GM12878 (cell line): ENCODE measurements at regions of chr12 and their contacts with region 1.

Region 1: DNA sequence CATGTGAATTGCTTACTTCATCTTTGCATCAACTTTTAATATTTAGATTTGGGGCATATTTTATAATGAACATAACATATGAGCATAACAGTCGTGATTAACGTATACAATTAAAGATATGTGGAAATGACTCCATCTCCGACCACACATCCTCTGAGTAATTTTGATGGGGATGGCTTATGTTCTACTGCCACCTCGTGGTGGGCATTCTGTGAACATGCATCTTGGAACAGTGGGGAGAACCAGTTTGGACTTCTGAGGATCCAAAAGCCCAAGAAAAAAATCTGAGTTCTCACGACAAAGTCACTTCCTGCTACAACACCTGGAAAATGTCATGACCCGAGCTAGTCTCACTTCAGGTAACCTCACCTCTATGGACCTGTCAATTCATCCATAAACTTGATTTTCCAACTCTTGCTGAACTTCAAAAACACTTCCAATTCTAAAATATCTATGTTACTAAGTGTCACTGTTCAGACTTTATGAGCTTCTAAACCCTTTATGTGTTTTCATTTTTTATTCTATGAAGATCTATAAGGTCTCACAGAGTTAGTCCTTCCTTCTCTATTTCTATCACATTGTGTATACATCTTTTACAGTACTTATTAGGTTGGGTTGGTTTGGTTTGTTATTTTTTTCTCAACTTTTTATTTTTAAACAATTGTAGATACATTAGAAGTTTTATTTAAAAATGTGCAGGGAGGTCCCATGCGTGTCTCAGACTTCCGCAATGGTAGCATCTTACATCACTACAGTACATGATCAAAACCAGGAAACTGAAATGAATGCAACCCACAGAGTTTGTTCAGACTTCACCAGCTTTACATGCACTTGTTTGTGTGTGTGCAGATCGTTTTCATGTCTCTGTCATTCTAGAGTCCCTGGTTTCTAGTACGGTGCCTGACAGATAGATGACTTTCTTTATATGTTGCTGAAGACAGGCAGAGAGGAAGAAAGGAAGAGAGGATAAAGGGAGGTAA is 38.2 kb upstream of the STAB2 start:
- DNase-seq: peak; percentile 76
- ATAC-seq: peak; percentile 93
- H3K4me3 ChIP-seq: no peak overlapping the region
- H3K27ac ChIP-seq: peak overlapping the region; percentile 29; the same call in 1 of the 2 replicates
- H3K4me1 ChIP-seq: peaks cover 4% of the 10 kb centered on the region
- H3K27me3 ChIP-seq: no peaks in the 10 kb centered on the region
- CTCF ChIP-seq: peak; percentile 73 to 87 (median 79)
- EP300 ChIP-seq: peak in 1 of 2 experiments; percentile 78; a peak in 1 of 4 replicates
- POLR2A ChIP-seq: no peak
- RAD21 ChIP-seq: peak; percentile 99

Region 2: GRCh38 chr12:102740141-102740955 is 808.6 kb before region 1 on chr12:
- CTCF ChIA-PET with region 1: interaction called, 11 read pairs
- POLR2A ChIA-PET with region 1: no interaction called
- RAD21 ChIA-PET with region 1: no interaction called
- SMC1A ChIA-PET with region 1: interaction called, 7 read pairs
- in situ Hi-C with region 1: no loop called
- intact Hi-C with region 1: no loop called
- DNase-seq: no peak
- ATAC-seq: peak; percentile 64
- H3K4me3 ChIP-seq: no peak overlapping the region
- H3K27ac ChIP-seq: no peak overlapping the region
- H3K4me1 ChIP-seq: peaks cover 1% of the 10 kb centered on the region
- H3K27me3 ChIP-seq: no peaks in the 10 kb centered on the region
- CTCF ChIP-seq: peak; percentile 17 to 64 (median 37); a peak in 3 of 6 replicates
- EP300 ChIP-seq: no peak
- POLR2A ChIP-seq: no peak
- RAD21 ChIP-seq: peak; percentile 74

Region 3: DNA sequence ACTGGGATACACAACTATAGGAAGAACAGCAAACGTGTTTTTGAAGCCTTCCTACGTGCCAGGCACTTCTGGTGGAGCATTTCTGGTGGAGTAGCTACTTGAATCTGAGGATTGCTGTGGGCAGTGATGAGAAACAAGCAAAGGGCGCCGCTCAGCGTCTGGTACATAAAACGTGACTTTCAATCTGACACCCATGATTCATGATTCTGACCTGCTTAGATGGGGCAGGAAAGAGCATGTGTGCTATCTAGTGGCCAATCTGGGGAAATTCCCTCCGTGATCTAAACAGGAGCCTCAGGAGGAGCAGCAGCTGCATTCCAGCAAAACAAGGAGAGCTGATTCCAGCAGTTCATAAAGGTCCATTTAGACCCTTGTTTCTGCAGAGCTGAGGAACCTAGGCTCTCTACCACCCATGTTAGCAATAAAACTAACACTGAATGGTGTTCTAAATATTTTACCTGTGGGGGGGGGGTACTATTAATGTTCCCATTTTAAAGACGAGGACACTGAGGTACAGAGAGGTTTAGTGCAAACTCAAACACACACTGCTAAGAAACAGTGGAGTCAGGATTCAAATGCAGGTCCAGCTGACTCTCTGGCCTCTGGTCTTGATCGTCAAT is 669.7 kb before region 1 on chr12:
- CTCF ChIA-PET with region 1: interaction called, 203 read pairs
- POLR2A ChIA-PET with region 1: interaction called, 4 read pairs
- RAD21 ChIA-PET with region 1: interaction called, 83 read pairs
- SMC1A ChIA-PET with region 1: interaction called, 157 read pairs
- in situ Hi-C with region 1: no loop called
- intact Hi-C with region 1: loop called (anchors 1 kb)
- DNase-seq: peak; percentile 51
- ATAC-seq: peak; percentile 88
- H3K4me3 ChIP-seq: no peak overlapping the region
- H3K27ac ChIP-seq: no peak overlapping the region
- H3K4me1 ChIP-seq: no peaks in the 10 kb centered on the region; the same call in 1 of the 2 replicates
- H3K27me3 ChIP-seq: no peaks in the 10 kb centered on the region
- CTCF ChIP-seq: peak; percentile 47 to 79 (median 73); a peak in 5 of 6 replicates
- EP300 ChIP-seq: no peak
- POLR2A ChIP-seq: no peak
- RAD21 ChIP-seq: peak; percentile 71

Region 4: DNA sequence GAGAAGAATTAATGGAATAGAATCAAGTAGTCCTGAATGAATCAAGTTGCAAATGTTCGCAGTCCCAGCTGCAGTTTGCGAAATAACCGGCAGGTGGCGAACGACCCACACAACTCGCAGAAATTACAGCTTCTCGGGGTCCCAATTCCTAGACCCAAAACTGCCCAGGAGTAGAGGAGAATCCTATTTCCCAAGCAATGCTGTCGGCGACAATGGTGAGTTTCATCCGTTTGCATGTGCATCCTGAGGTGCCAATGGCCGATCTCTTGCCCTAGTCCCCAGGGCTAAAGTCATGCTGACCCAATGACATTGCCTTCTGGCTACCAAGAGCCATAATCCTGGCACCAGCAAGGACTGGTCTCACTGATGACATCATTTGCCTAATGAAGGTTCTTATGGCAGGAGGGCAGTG is 600.0 kb before region 1 on chr12:
- CTCF ChIA-PET with region 1: interaction called, 152 read pairs
- POLR2A ChIA-PET with region 1: interaction called, 3 read pairs
- RAD21 ChIA-PET with region 1: interaction called, 121 read pairs
- SMC1A ChIA-PET with region 1: interaction called, 133 read pairs
- in situ Hi-C with region 1: loop called (anchors 5 kb)
- intact Hi-C with region 1: loop called (anchors 1 kb)
- DNase-seq: no peak
- ATAC-seq: peak; percentile 32
- H3K4me3 ChIP-seq: no peak overlapping the region
- H3K27ac ChIP-seq: no peak overlapping the region
- H3K4me1 ChIP-seq: peaks cover 8% of the 10 kb centered on the region
- H3K27me3 ChIP-seq: no peaks in the 10 kb centered on the region; a peak in 1 of 4 replicates
- CTCF ChIP-seq: peak; percentile 88 to 94 (median 90)
- EP300 ChIP-seq: no peak
- POLR2A ChIP-seq: no peak
- RAD21 ChIP-seq: peak; percentile 88

Region 5: GRCh38 chr12:103114296-103115055 is 434.4 kb before region 1 on chr12:
- CTCF ChIA-PET with region 1: interaction called, 3 read pairs
- POLR2A ChIA-PET with region 1: no interaction called
- RAD21 ChIA-PET with region 1: interaction called, 6 read pairs
- SMC1A ChIA-PET with region 1: interaction called, 4 read pairs
- in situ Hi-C with region 1: no loop called
- intact Hi-C with region 1: loop called (anchors 2 kb)
- DNase-seq: peak; percentile 95
- ATAC-seq: peak; percentile 98
- H3K4me3 ChIP-seq: no peak overlapping the region
- H3K27ac ChIP-seq: peak overlapping the region; percentile 80
- H3K4me1 ChIP-seq: peaks cover 19% of the 10 kb centered on the region
- H3K27me3 ChIP-seq: no peaks in the 10 kb centered on the region
- CTCF ChIP-seq: no peak
- EP300 ChIP-seq: peak; percentile 73 to 94; a peak in 3 of 4 replicates
- POLR2A ChIP-seq: no peak
- RAD21 ChIP-seq: peak; percentile 47

Region 6: DNA sequence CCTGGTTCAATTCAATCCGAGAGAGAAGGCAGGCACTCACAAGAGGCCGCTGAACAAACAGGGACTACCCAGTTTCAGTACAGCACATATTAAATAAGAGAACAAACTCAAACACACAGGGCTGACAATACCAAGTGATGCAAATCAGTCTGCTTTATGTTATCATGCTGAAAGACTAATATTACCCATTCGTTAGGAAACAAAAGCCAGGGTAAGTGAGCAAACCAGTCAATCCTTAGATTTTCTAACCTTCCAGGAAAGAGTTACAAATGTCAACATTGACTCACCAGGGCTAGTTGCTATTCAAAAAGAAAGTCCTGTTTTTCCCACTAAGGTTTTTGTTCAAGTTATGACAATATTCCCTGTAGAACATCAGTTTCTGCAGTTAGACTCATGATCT is 299.3 kb before region 1 on chr12:
- CTCF ChIA-PET with region 1: no interaction called
- POLR2A ChIA-PET with region 1: no interaction called
- RAD21 ChIA-PET with region 1: no interaction called
- SMC1A ChIA-PET with region 1: no interaction called
- in situ Hi-C with region 1: no loop called
- intact Hi-C with region 1: no loop called
- DNase-seq: no peak
- ATAC-seq: no peak
- H3K4me3 ChIP-seq: no peak overlapping the region
- H3K27ac ChIP-seq: no peak overlapping the region
- H3K4me1 ChIP-seq: no peaks in the 10 kb centered on the region
- H3K27me3 ChIP-seq: no peaks in the 10 kb centered on the region
- CTCF ChIP-seq: no peak
- EP300 ChIP-seq: no peak
- POLR2A ChIP-seq: no peak
- RAD21 ChIP-seq: no peak

Region 7: DNA sequence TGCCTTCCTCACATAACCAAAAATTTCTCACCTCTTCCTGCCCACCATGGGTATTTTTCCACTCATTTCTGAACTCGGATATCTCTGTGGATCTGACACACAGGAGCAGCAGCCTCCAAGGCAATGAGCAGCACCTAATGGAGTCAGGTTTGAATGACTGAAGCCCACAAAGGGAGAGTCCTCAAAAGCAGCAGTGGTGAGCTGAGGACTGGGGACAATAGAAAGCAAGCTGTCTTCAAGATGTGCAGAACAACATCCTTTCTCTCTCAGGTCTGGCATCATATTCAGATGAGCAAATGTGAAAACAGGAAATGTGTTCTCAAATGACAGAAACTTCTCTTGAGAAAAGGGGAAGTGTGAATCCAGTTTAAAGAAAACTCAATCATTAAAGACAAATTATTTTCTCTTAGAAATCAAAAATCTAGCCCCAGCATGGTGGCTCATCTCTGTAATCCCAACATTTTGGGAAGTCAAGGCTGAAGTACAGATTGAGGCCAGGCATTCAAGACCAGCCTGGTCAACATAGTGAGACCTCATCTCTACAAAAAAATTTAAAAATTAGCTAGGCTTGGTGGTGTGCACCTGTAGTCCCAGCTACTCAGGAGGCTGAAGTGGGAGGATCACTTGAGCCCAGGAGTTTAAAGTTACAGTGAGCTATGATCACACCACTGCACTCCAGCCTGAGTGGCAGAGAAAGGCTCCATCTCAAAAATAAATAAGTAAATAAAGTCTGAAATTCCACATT is 107.3 kb before region 1 on chr12:
- CTCF ChIA-PET with region 1: interaction called, 4 read pairs
- POLR2A ChIA-PET with region 1: no interaction called
- RAD21 ChIA-PET with region 1: interaction called, 8 read pairs
- SMC1A ChIA-PET with region 1: interaction called, 4 read pairs
- in situ Hi-C with region 1: no loop called
- intact Hi-C with region 1: loop called (anchors 2 kb)
- DNase-seq: peak; percentile 97
- ATAC-seq: peak; percentile 98
- H3K4me3 ChIP-seq: peak overlapping the region; percentile 58
- H3K27ac ChIP-seq: peak overlapping the region; percentile 71
- H3K4me1 ChIP-seq: peaks cover 22% of the 10 kb centered on the region
- H3K27me3 ChIP-seq: no peaks in the 10 kb centered on the region
- CTCF ChIP-seq: peak in 2 of 3 experiments; percentile 11 to 28; a peak in 1 of 6 replicates
- EP300 ChIP-seq: peak; percentile 72 to 96; a peak in 3 of 4 replicates
- POLR2A ChIP-seq: peak; percentile 64
- RAD21 ChIP-seq: peak; percentile 55

Region 8: DNA sequence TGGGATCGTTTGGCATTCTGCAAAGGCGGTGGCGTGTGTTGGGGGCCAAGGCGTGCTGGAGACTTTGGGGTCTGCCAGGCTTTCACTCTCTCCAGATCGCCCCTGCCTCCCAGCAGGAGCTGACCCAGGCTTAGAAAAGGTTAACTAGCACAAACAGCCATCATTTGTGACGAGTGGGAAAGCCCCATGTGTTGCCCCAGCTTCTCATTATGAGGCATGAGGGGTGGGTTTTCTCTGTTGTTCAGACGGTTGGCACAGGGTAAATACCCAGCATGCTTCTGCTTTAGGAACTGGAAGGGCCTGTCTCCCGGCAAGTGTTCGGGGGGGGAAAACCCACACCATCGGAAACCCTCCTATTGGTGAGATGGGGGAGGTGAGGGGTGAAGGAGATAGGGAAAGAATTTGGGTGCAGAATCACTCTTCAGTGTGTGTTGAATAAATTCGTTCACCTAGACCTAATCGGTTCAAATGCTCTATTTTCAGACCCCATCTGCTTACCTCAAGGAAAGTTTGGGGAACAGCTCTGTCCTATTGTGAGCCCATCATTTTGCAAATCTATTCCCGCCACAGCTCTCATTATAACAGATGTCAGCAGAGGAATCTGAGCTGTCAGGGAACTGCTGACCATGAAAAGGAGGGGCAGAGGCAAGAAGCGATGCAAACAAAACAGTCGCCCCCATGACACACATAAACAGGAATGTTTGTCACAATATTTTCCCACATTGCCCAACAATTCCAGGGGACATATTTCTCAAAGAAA is 18.4 kb before region 1 on chr12:
- CTCF ChIA-PET with region 1: interaction called, 58 read pairs
- POLR2A ChIA-PET with region 1: no interaction called
- RAD21 ChIA-PET with region 1: interaction called, 34 read pairs
- SMC1A ChIA-PET with region 1: interaction called, 111 read pairs
- in situ Hi-C with region 1: no loop called
- intact Hi-C with region 1: no loop called
- DNase-seq: no peak
- ATAC-seq: peak; percentile 94
- H3K4me3 ChIP-seq: no peak overlapping the region
- H3K27ac ChIP-seq: no peak overlapping the region
- H3K4me1 ChIP-seq: peaks cover 8% of the 10 kb centered on the region
- H3K27me3 ChIP-seq: no peaks in the 10 kb centered on the region
- CTCF ChIP-seq: no peak
- EP300 ChIP-seq: no peak; a peak in 1 of 4 replicates
- POLR2A ChIP-seq: no peak
- RAD21 ChIP-seq: no peak

Region 9: DNA sequence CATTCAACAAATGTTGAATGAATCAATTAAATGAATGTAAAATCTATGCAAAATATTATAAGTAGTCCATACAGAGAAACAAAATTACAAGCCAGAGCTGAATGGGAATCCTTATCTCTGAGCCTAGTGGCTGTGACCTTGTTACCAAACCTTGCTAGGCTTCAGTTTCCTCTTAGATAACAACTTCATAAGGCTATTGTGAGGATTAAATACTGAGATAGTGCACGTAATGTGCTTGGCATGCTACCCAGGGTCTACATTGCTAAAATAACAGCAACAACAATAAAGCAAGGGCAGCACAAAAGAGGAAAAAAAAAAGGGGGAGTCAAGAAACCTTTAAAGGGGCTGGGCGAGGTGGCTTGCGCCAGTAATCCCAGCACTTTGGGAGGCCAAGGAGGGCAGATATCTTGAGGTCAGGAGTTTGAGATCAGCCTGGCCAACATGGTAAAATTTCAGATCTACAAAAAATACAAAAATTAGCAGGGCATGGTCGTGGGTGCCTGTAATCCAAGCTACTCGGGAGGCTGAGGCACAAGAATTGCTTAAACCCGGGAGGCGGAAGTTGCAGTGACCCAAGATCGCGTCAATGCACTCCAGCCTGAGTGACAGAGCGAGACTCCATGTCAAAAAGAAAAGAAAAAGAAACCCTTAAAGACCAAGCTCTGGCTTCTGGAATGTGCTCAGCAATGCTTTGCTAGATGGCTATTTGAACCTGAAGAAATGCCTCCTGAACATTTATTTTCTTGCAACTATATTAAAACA is 52.2 kb after region 1 on chr12:
- CTCF ChIA-PET with region 1: no interaction called
- POLR2A ChIA-PET with region 1: no interaction called
- RAD21 ChIA-PET with region 1: no interaction called
- SMC1A ChIA-PET with region 1: no interaction called
- in situ Hi-C with region 1: no loop called
- intact Hi-C with region 1: no loop called
- DNase-seq: no peak
- ATAC-seq: no peak
- H3K4me3 ChIP-seq: no peak overlapping the region
- H3K27ac ChIP-seq: no peak overlapping the region
- H3K4me1 ChIP-seq: no peaks in the 10 kb centered on the region
- H3K27me3 ChIP-seq: no peaks in the 10 kb centered on the region
- CTCF ChIP-seq: no peak
- EP300 ChIP-seq: no peak
- POLR2A ChIP-seq: no peak
- RAD21 ChIP-seq: no peak

Region 10: GRCh38 chr12:103956516-103957027 is 407.7 kb after region 1 on chr12:
- CTCF ChIA-PET with region 1: no interaction called
- POLR2A ChIA-PET with region 1: no interaction called
- RAD21 ChIA-PET with region 1: no interaction called
- SMC1A ChIA-PET with region 1: no interaction called
- in situ Hi-C with region 1: no loop called
- intact Hi-C with region 1: no loop called
- DNase-seq: no peak
- ATAC-seq: peak; percentile 31
- H3K4me3 ChIP-seq: peak overlapping the region; percentile 80
- H3K27ac ChIP-seq: peak overlapping the region; percentile 77
- H3K4me1 ChIP-seq: peaks cover 8% of the 10 kb centered on the region
- H3K27me3 ChIP-seq: no peaks in the 10 kb centered on the region
- CTCF ChIP-seq: no peak
- EP300 ChIP-seq: no peak
- POLR2A ChIP-seq: no peak
- RAD21 ChIP-seq: no peak